Mammary epithelial cell (primary cell): ENCODE measurements at regions of chr15 and their contacts with region 1.

Region 1: DNA sequence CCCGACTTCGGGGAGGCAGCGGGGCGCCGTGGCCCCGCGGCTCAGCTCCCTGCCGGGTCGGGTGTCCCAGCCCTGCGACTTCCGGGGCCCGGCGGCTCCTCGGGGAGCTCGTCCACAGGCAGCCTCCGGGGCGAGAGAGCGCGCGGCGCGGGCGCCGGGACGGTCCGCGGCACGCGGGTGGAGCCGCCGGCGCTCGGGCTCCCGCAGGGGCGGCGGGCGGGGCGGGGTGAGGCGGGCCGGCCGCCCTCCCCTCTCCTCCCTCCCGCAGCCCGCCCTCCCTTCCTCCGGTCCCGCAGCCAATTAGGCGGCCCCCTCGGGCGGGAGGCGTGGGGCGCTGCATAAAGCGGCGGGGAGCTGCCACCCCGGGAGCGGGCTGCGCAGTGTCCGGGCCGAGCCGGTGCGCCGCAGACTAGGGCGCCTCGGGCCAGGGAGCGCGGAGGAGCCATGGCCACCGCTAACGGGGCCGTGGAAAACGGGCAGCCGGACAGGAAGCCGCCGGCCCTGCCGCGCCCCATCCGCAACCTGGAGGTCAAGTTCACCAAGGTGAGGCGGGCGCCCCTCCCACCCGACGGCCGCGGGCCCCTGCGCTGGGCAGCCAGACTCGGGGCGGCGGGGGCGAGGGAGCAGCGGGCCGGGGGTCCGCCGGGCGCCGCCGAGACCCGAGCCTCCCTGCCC is at the start of gene ALDH1A3:
- DNase-seq: peak; percentile 81
- H3K4me3 ChIP-seq: peak within 1 kb of the TSS; percentile 68 to 77 (median 70)
- H3K27ac ChIP-seq: peak within 1 kb of the TSS; percentile 26
- H3K4me1 ChIP-seq: peaks cover 36% of the 10 kb centered on the region
- H3K27me3 ChIP-seq: no peaks in the 10 kb centered on the region
- CTCF ChIP-seq: no peak
- total RNA-seq, gene ALDH1A3: 284 to 347 TPM

Region 2: DNA sequence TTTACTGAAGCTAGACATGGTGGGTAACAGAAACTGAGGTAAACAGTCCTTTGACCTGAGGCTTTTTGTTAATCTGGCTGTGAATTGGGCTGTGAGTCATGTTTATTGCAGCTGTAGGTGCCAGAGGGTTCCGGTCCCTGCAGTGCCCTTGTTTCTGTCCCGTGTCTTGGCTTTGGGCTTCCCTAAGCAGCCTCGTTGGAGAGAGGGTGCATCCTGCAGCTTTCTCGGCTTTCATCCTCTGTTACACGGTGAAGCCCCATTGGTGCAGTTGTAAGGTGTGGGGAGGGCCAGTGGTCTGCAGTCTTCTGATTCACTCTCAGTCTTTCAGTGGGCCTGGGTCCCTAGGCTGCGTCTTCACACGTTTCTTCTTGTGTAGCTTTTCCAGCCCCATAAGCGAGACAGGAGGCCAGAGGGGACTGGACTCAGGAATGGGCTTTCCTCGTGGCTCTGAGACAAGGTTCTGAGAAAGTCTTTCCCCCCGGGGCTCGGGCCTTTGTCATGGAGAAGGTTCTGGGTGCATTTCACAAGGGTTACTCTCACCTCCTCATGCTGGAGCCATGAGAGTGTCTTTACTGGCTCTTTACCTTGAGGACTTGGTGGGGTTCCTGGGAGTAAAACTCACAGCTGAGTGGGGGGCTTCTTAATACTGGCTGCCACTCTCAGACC is 244.1 kb before region 1 on chr15:
- CTCF ChIA-PET with region 1: no interaction called
- dilution Hi-C with region 1: no loop called
- in situ Hi-C with region 1: loop called (anchors 10 kb)
- intact Hi-C with region 1: no loop called
- DNase-seq: no peak
- H3K4me3 ChIP-seq: no peak overlapping the region
- H3K27ac ChIP-seq: no peak overlapping the region
- H3K4me1 ChIP-seq: peaks cover 10% of the 10 kb centered on the region
- H3K27me3 ChIP-seq: no peaks in the 10 kb centered on the region
- CTCF ChIP-seq: no peak

Region 3: GRCh38 chr15:100703032-100703578 is 176.5 kb before region 1 on chr15:
- CTCF ChIA-PET with region 1: no interaction called
- dilution Hi-C with region 1: no loop called
- in situ Hi-C with region 1: no loop called
- intact Hi-C with region 1: no loop called
- DNase-seq: peak; percentile 74
- H3K4me3 ChIP-seq: no peak overlapping the region
- H3K27ac ChIP-seq: peak overlapping the region; percentile 65
- H3K4me1 ChIP-seq: peaks cover 22% of the 10 kb centered on the region
- H3K27me3 ChIP-seq: no peaks in the 10 kb centered on the region
- CTCF ChIP-seq: no peak

Region 4: DNA sequence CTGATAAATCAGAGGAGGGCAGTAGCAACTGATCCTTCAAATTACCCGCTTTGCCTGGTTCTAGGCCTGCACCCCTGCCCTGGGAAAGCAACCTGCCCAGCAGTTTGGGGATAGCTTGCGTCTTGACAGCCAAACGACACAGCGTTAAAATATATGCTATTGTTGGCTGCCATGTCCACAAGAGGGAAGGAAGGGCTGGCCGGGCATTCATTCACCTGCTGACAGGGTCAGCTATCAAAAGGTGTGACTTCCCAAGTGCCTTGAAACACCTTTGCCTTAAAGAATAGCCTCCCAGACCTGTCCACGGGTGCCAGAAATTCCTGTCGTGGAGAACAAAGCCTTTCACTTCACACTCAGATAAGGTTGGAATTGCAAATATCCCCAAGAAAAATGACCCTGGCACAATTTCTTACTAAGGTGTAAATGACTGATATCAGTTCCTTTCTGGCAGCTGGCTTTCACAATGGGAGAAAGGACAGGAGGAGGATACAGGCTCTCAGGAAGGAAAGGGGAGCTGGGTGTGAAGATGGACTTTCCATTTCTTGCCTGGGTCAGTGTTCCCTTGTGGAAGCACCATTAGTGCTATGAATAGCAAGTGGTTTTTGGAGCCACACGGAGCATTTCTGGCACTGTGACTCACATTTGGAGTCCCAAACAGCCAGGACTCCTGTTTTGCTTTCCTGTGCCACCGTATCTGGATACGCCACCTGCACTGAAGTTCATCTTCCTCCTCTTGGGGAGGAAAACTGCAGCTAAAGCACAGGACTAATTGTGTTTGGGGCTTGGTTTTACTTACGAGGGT is 19.3 kb after region 1 on chr15:
- CTCF ChIA-PET with region 1: no interaction called
- dilution Hi-C with region 1: no loop called
- in situ Hi-C with region 1: no loop called
- intact Hi-C with region 1: loop called (anchors 1 kb)
- DNase-seq: no peak
- H3K4me3 ChIP-seq: no peak overlapping the region
- H3K27ac ChIP-seq: no peak overlapping the region
- H3K4me1 ChIP-seq: peaks cover 30% of the 10 kb centered on the region
- H3K27me3 ChIP-seq: no peaks in the 10 kb centered on the region
- CTCF ChIP-seq: no peak